ENCODE measurements at regions of chr6 and their contacts with region 1.

Region 1: DNA sequence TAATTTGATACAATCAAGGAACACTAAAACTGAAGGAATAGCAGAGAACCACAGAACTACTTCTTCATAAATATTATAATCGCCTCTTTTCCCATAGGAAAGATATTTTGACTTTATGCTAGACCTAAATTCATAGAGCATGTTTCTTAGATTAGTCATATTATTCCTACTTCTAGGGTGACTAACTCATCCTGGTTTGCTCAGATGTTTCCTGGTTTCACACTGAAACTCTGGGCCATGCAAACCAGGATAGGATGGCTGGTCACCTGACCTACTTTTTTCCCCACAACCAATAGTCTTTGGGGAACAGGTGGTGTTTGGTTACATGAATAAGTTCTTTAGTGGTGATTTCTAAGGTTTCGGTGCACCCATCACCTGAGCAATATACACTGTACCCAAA is 42.8 kb downstream of the MMS22L start:
- DNase-seq: no peak
- H3K4me3 ChIP-seq: no peak overlapping the region
- H3K27ac ChIP-seq: no peak overlapping the region
- H3K4me1 ChIP-seq: no peaks in the 10 kb centered on the region
- H3K27me3 ChIP-seq: no peaks in the 10 kb centered on the region
- CTCF ChIP-seq: no peak
- EP300 ChIP-seq: no peak
- POLR2A ChIP-seq: no peak

Region 2: GRCh38 chr6:97195117-97195516 is 45.1 kb before region 1 on chr6:
- intact Hi-C with region 1: loop called in 1 of 4 experiments (anchors 10 kb)
- DNase-seq: no peak
- H3K4me3 ChIP-seq: no peak overlapping the region
- H3K27ac ChIP-seq: no peak overlapping the region
- H3K4me1 ChIP-seq: no peaks in the 10 kb centered on the region
- H3K27me3 ChIP-seq: no peaks in the 10 kb centered on the region
- CTCF ChIP-seq: no peak
- EP300 ChIP-seq: no peak
- POLR2A ChIP-seq: no peak

Measured in ovary (tissue), 10 donors.